AG04449 (cell line): ENCODE measurements at regions of chr4 and their contacts with region 1.

Region 1: DNA sequence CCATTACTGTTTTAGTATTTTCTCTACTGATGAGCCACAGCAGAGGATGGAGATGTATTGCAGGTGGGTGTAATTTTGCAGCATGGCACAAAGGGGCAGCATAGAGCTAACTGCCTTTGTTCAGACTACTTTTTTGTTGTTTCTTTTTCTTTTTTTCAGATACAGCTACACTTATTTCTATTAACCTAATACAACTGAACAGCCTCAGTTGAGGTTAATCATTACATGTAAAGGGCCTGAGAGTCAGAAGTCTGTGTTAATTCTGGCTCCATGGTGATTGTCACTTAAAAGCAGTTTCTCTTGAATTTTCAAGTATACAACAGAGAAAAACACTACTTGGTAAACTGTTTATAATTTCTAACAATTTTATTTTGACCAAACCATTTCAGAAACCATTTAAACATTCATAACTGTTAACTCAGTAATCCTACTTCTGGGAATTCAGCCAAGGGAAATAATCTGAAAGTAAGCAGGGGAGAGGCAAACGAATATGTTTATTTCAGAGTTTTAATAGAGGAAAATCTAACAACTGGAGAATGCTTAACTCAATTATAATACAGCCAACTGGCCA is 13.9 kb upstream of the PPEF2 start:
- DNase-seq: peak; percentile 29
- H3K4me3 ChIP-seq: no peak overlapping the region
- CTCF ChIP-seq: peak; percentile 60

Region 2: DNA sequence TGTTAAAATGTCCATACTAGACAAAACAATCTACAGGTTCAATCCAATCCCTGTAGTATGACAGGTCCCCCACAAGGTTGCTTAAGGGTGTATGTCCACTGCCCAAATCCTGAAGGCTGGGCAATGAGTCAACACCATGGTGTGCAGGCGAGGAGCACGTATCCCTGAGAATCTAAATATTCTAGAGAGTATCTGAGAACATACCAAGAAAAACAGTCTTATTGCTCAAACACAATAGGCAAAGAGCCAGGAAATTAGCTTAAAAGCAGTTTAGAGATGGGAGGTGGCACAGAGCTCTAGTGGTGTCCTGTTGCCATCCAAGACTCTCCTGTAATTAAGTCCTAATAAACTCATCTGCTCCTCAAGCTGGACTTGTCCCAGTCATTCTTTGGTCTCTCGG is 439.0 kb before region 1 on chr4:
- CTCF ChIA-PET with region 1: no interaction called
- POLR2A ChIA-PET with region 1: no interaction called
- DNase-seq: no peak
- H3K4me3 ChIP-seq: no peak overlapping the region
- CTCF ChIP-seq: no peak

Region 3: GRCh38 chr4:75895744-75896314 is 20.3 kb before region 1 on chr4:
- CTCF ChIA-PET with region 1: interaction called, 24 read pairs
- POLR2A ChIA-PET with region 1: no interaction called
- DNase-seq: no peak
- H3K4me3 ChIP-seq: no peak overlapping the region
- CTCF ChIP-seq: peak; percentile 49

Region 4: DNA sequence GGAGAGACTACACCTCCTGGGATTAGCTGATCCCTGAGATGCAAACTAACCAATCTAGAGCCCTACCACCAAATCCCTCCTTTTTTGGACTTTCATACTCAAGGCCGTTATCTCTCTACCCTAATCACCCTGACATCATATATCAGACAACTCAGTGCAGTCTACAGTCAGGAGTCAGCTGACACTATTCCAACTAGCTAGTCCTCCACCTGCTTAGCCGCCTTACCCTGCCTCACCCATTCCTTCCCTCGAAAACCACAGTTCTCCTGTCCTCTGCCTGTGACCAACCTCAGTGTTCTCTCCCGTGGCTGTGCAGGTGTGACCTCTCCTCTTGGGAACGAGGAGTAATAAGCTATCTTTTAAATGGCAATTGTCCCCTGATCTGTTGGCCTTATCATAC is 12.1 kb before region 1 on chr4:
- CTCF ChIA-PET with region 1: interaction called, 16 read pairs
- POLR2A ChIA-PET with region 1: interaction called, 3 read pairs
- DNase-seq: no peak
- H3K4me3 ChIP-seq: no peak overlapping the region
- CTCF ChIP-seq: no peak

Region 5: DNA sequence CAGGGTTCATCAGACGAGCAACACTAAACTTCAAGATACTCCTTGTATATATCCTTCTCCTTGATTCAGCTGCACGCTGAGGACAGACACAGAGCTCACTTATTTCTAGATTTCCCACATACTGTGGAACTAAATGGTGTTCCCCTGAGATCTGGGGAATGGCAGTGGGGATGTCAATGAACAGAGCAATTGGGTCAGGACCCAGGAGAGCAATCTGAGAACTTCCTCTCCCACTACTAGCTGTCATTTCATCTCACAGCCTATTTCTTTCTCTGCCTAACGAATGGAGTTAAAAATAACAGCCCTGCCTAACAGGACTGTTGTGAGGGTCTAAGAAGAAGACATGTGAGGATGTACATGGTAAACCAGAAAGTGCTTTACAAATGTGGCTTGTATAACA is 14.0 kb after region 1 on chr4:
- CTCF ChIA-PET with region 1: interaction called, 17 read pairs
- POLR2A ChIA-PET with region 1: no interaction called
- DNase-seq: no peak
- H3K4me3 ChIP-seq: no peak overlapping the region
- CTCF ChIP-seq: no peak

Region 6: DNA sequence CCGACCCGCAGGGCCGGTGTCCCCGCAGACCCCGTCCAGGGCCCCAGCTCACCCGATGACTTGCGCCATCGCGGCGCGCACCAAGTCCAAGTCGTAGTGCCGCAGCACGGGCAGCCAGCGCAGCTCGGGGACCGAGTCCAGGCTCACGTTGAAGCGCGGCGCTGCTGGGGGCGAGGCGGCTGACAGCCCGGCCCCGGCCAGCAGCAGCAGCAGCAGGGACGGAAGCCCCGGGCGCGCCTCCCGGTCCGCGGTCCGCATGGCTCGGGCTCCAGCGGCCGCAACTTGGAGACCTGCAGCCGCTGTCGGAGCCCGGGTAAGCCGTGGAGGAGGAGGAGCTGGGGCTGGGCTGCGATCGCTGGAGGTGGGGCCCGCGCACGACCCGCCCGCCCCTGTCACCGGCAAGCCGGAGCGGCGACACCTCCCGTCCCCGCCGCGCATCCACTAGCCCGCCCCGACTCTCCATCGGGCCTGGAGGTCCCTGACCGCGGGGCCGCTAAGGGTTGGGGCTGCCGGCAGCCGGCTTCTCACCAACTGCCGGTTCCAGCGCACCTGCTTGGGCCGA is 24.6 kb after region 1 on chr4 and contains the start of gene NAAA:
- CTCF ChIA-PET with region 1: interaction called, 17 read pairs
- POLR2A ChIA-PET with region 1: no interaction called
- DNase-seq: no peak
- H3K4me3 ChIP-seq: peak within 1 kb of the TSS; percentile 74
- CTCF ChIP-seq: no peak

Region 7: DNA sequence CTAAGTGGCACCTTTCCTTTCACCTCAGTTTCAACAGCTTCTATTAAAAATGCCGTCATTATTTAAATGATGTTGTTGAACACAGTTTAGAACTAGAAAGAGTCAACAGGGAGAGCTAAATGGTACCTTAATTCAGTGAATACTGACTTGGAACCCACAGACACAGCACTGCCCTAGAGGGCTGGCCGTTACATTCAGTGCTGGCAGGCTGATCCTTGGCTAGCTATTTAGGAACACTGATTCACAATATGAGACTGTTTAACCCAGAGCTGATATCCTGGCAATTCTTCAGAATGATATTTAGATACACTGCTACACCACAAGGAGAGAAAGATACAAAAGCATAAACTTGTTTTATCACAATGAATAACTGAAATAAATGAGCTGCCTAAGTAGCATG is 37.3 kb after region 1 on chr4:
- CTCF ChIA-PET with region 1: interaction called, 14 read pairs
- POLR2A ChIA-PET with region 1: no interaction called
- DNase-seq: no peak
- H3K4me3 ChIP-seq: no peak overlapping the region
- CTCF ChIP-seq: no peak

Region 8: DNA sequence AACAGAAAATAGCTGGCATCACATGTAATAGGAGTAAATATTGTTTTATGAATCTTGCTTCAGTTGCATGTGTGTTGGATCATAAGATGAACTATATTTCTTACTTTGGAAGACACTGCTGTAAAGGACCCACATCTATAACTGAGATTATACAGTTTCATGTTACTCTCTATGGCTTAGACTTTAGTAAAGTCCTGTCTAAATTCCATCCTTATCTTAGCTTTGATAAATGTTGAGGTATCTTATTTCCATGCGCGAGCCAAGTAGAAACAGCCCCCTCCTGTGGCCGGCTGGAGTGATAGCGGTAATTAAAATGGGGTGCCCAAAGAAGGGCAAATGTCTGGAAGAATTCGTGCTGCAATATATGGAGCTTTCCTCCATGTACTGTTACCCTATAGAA is 461.7 kb after region 1 on chr4:
- CTCF ChIA-PET with region 1: no interaction called
- POLR2A ChIA-PET with region 1: no interaction called
- DNase-seq: no peak
- H3K4me3 ChIP-seq: no peak overlapping the region
- CTCF ChIP-seq: peak; percentile 29